ENCODE measurements at regions of chr5 and their contacts with region 1.

Region 1: GRCh38 chr5:175444060-175444904 is at the start of gene DRD1:
- DNase-seq: no peak
- ATAC-seq: peak; percentile 64
- total RNA-seq, gene DRD1: not detected

Region 2: DNA sequence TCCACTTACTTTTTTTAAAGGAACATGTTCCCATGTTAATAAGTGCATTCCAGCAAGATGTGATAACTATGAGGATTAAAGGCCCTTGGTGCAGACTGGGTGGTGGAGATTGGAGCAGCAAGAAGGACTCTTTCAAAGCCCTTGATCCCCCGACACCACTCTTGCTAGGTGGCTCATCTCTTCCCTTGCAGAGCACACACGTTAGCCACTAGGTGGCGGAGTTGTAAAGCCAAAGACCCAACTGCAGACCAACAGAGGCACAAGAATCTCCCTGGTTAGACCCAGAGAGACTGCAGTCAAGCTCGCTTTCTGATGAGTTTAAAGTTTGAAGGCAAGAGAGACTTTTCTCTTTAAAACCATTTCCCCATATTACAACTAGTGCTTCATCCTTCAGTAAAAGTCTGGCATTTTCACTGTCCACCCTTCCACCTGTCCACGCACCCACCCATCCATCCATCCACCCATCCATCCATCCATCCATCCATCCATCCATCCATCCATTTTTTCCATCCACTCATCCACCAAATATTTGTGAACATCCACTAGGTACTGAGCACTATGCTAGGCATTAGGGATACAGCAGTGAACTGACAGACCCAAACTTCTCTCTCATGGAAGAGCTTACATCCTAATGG is 493.0 kb before region 1 on chr5:
- intact Hi-C with region 1: loop called (anchors 1 kb)
- DNase-seq: no peak
- ATAC-seq: peak; percentile 83

Measured in Right ventricle myocardium inferior (tissue), 1 donor.